ENCODE measurements at regions of chr9 and their contacts with region 1.

Region 1: GRCh38 chr9:129979071-129979745 is 63.8 kb downstream of the FNBP1 start:
- DNase-seq: no peak
- ATAC-seq: no peak
- H3K4me3 ChIP-seq: no peak overlapping the region
- H3K27ac ChIP-seq: no peak overlapping the region
- H3K4me1 ChIP-seq: no peaks in the 10 kb centered on the region
- H3K27me3 ChIP-seq: no peaks in the 10 kb centered on the region
- CTCF ChIP-seq: no peak

Region 2: DNA sequence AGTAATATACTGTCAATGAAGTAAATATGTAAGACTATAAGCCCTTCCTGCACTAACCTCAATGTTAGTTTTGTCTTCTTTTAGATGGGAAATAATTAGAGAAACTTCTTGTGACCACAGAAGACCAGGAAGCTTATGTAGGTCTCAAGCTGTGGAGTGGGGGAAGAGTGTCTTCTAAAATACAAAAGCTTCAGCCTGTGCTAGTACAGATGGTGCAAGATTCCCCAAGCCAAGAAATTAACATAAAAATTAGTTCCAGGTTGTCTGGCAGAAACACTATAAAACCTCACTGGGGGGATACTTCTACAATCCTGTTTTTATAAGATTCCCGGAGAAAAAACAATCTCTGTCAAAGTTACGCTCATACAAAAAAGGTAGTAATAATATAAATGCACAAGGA is 39.8 kb before region 1 on chr9:
- intact Hi-C with region 1: loop called in 1 of 2 experiments (anchors 1 kb)
- DNase-seq: no peak
- ATAC-seq: no peak
- H3K4me3 ChIP-seq: no peak overlapping the region
- H3K27ac ChIP-seq: no peak overlapping the region
- H3K4me1 ChIP-seq: peaks cover 11% of the 10 kb centered on the region
- H3K27me3 ChIP-seq: no peaks in the 10 kb centered on the region
- CTCF ChIP-seq: no peak

Measured in psoas muscle (tissue), 8 donors.